ENCODE measurements at regions of chr12 and their contacts with region 1.

Region 1: DNA sequence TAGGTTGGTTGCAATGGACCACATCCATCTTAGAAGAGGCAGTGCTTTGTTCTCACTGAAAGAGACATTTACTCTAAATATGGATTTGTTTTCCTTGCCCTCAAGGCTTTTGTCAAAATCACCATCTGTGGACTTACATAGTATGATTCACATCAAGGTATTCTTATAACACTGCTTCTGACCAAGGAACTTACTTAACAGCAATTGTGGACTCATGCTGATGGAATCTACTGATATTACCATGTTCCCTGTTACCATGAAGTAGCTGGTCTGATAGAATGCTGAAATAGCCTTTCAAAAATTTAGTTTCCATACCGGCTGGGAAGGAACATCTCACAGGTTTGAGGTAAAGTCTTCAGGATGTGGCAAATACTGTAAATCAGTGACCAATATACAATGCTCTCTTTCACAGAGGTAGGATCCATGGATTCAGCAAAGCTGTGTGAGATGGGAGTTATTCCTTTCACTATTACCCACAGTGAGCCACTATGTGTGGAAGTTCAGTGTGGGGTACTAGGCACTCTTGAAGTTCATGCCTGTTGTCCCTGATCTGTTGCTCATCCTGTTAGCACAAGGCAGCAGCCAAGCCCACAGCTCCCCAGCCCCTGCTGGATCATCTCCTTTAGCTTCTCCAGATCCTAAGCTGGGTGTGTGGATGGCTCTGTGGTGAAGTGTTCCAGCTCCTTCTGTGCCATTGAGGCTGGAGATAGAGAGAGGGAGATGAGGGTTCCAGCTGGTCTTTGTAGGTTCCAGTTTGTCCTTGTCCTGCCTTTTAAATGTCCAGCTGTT is 126.4 kb downstream of the ATP23 start:
- DNase-seq: peak; percentile 98
- H3K4me3 ChIP-seq: no peak overlapping the region
- H3K27ac ChIP-seq: peak overlapping the region; percentile 79
- H3K4me1 ChIP-seq: peaks cover 43% of the 10 kb centered on the region
- H3K27me3 ChIP-seq: no peaks in the 10 kb centered on the region
- CTCF ChIP-seq: no peak

Region 2: DNA sequence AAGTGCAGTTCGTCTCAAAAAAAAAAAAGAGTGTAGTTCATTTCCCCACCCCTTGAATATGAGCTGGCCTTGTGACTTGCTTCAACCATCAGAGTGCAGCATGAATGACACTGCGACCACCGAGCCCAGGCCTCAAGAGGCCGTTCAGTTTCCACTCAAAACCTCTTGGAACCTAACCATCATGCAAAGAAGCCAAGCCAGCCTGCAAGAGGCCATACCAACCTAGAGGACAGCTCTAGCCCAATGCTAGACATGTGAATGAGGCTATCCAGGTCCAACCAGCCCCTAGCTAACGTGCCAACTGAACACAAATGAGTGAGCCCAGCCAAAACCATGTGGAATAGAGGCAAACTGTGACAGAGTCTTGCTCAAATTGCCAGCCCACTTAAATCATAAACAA is 666.6 kb before region 1 on chr12:
- CTCF ChIA-PET with region 1: no interaction called
- dilution Hi-C with region 1: no loop called
- in situ Hi-C with region 1: no loop called
- intact Hi-C with region 1: no loop called
- DNase-seq: no peak
- H3K4me3 ChIP-seq: no peak overlapping the region
- H3K27ac ChIP-seq: no peak overlapping the region
- H3K4me1 ChIP-seq: peaks cover 8% of the 10 kb centered on the region
- H3K27me3 ChIP-seq: no peaks in the 10 kb centered on the region
- CTCF ChIP-seq: no peak

Region 3: GRCh38 chr12:57993025-57993424 is 74.8 kb before region 1 on chr12:
- CTCF ChIA-PET with region 1: no interaction called
- dilution Hi-C with region 1: no loop called
- in situ Hi-C with region 1: no loop called
- intact Hi-C with region 1: loop called (anchors 5 kb)
- DNase-seq: no peak
- H3K4me3 ChIP-seq: no peak overlapping the region
- H3K27ac ChIP-seq: no peak overlapping the region
- H3K4me1 ChIP-seq: no peaks in the 10 kb centered on the region
- H3K27me3 ChIP-seq: no peaks in the 10 kb centered on the region
- CTCF ChIP-seq: no peak

Region 4: DNA sequence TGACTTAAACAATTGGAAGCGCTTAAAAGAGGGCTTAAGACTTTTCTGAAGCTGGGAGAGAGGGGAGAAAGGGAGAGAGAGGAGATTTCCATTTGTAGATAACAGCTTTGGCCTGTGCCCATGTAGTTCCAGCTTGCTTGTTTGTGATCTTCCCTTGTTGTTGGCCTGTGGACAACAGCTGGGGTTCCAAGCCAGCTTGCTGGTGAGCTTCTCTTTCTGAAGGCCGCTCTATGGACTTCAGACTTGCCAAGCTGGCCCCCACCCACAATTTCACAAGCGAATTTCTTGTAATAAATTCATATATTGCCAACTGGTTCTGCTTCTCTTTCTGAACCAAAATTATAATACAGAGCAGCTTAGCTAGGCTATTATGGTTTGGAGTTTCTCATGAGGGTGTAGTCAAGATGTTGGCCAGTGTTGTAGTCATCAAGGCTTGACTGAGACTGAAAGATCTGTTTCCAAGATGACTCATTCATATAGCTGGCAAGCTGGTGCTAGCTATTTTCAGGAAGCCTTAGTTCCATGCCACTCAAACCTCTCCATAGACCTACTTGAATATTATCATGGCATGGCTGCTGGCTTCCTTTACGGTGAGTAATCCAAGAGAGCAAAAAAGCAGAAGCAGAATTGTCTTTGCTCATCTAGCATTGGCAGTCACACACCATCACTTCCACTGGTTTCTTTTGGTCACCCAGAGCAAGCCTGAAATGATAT is 37.1 kb before region 1 on chr12:
- CTCF ChIA-PET with region 1: no interaction called
- dilution Hi-C with region 1: no loop called
- in situ Hi-C with region 1: no loop called
- intact Hi-C with region 1: loop called (anchors 5 kb)
- DNase-seq: peak; percentile 97
- H3K4me3 ChIP-seq: no peak overlapping the region
- H3K27ac ChIP-seq: peak overlapping the region; percentile 62
- H3K4me1 ChIP-seq: peaks cover 28% of the 10 kb centered on the region
- H3K27me3 ChIP-seq: no peaks in the 10 kb centered on the region
- CTCF ChIP-seq: no peak

Region 5: DNA sequence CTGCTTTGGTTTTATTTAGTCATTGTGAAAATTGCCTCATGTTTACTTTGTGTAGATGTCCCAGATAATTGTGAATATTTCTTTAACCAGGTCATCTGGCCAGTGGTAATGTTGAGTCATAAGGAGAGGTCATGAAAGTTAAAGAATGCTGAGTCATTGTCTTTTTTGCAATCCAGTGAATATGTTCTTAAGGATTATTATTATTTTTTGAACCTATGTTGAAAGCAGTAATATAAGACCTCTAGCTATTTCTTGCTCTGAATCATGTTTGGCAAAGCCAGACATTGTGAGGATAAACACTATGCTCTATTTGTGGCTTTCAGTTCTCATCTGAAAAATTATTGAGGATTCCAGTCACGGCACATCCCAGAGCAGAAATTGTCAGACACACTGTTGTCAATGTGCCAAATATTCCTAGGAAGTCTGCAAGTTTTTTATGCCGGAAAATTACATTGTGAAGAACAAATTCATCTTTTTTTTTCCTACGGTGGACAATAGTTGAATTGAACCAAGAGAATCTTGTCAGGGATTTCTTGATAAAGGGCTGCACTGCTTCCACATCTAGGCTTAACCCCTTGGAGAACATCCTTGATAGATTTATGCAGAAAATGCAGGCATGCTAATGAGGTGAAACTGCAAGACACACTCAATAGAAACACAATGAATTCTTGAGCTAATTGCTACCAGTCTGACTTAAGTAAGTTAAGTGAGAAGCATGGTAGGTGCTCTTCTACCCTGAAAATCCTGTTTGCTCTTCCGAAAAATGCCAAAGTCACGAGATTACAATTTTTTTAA is 243.2 kb after region 1 on chr12:
- CTCF ChIA-PET with region 1: no interaction called
- dilution Hi-C with region 1: no loop called
- in situ Hi-C with region 1: no loop called
- intact Hi-C with region 1: loop called (anchors 5 kb)
- DNase-seq: peak; percentile 97
- H3K4me3 ChIP-seq: no peak overlapping the region
- H3K27ac ChIP-seq: peak overlapping the region; percentile 84
- H3K4me1 ChIP-seq: peaks cover 40% of the 10 kb centered on the region
- H3K27me3 ChIP-seq: no peaks in the 10 kb centered on the region
- CTCF ChIP-seq: no peak

Measured in mammary epithelial cell (primary cell).